ENCODE measurements at regions of chr18 and their contacts with region 1.

Region 1: GRCh38 chr18:30486856-30487255 is 555.7 kb downstream of the DSC3 start:
- DNase-seq: no peak
- H3K4me3 ChIP-seq: no peak overlapping the region
- H3K27ac ChIP-seq: no peak overlapping the region
- H3K4me1 ChIP-seq: no peaks in the 10 kb centered on the region
- H3K27me3 ChIP-seq: no peaks in the 10 kb centered on the region
- CTCF ChIP-seq: no peak

Region 2: DNA sequence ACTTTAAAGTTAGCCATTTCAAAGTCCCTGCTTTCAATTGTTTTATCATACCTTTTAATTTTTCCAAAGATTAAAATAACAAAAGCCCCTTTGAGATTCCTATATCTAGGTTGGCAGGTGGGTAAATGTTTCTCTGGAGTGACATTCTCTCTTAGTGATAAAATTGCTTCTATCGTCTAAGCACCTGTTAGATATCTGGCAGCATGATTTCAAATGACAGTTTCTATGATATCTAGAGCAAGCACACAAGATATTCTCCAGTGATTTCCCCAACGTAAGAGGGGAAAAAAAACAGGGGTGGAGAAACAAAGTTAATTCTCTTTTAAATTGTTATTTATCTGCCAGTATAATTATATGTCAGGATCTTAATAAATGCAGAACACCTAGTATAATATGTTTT is 54.5 kb before region 1 on chr18:
- intact Hi-C with region 1: loop called (anchors 10 kb)
- DNase-seq: no peak
- H3K4me3 ChIP-seq: no peak overlapping the region
- H3K27ac ChIP-seq: no peak overlapping the region
- H3K4me1 ChIP-seq: no peaks in the 10 kb centered on the region
- H3K27me3 ChIP-seq: no peaks in the 10 kb centered on the region
- CTCF ChIP-seq: no peak

Region 3: GRCh38 chr18:30787410-30787809 is 300.6 kb after region 1 on chr18:
- intact Hi-C with region 1: no loop called
- DNase-seq: no peak
- H3K4me3 ChIP-seq: no peak overlapping the region
- H3K27ac ChIP-seq: no peak overlapping the region
- H3K4me1 ChIP-seq: no peaks in the 10 kb centered on the region
- H3K27me3 ChIP-seq: no peaks in the 10 kb centered on the region
- CTCF ChIP-seq: no peak

Measured in left ventricle myocardium inferior (tissue), 1 donor.